Endothelial cell of umbilical vein (primary cell): ENCODE measurements at regions of chr2 and their contacts with region 1.

Region 1: GRCh38 chr2:184780944-184781343 is 182.6 kb downstream of the ZNF804A start:
- DNase-seq: peak; percentile 66
- H3K4me3 ChIP-seq: no peak overlapping the region
- H3K27ac ChIP-seq: peak overlapping the region; percentile 68
- H3K4me1 ChIP-seq: peaks cover 22% of the 10 kb centered on the region
- H3K27me3 ChIP-seq: no peaks in the 10 kb centered on the region
- CTCF ChIP-seq: no peak
- POLR2A ChIP-seq: no peak

Region 2: GRCh38 chr2:184481865-184482264 is 299.1 kb before region 1 on chr2:
- CTCF ChIA-PET with region 1: no interaction called
- POLR2A ChIA-PET with region 1: no interaction called
- dilution Hi-C with region 1: no loop called
- intact Hi-C with region 1: no loop called
- DNase-seq: no peak
- H3K4me3 ChIP-seq: no peak overlapping the region
- H3K27ac ChIP-seq: no peak overlapping the region
- H3K4me1 ChIP-seq: no peaks in the 10 kb centered on the region
- H3K27me3 ChIP-seq: no peaks in the 10 kb centered on the region
- CTCF ChIP-seq: no peak
- POLR2A ChIP-seq: no peak

Region 3: GRCh38 chr2:184765112-184765895 is 15.6 kb before region 1 on chr2:
- CTCF ChIA-PET with region 1: interaction called, 4 read pairs
- POLR2A ChIA-PET with region 1: no interaction called
- dilution Hi-C with region 1: no loop called
- intact Hi-C with region 1: loop called (anchors 1 kb)
- DNase-seq: no peak
- H3K4me3 ChIP-seq: no peak overlapping the region
- H3K27ac ChIP-seq: no peak overlapping the region
- H3K4me1 ChIP-seq: peaks cover 34% of the 10 kb centered on the region
- H3K27me3 ChIP-seq: no peaks in the 10 kb centered on the region
- CTCF ChIP-seq: no peak
- POLR2A ChIP-seq: no peak